ENCODE measurements at regions of chr6 and their contacts with region 1.

Region 1: DNA sequence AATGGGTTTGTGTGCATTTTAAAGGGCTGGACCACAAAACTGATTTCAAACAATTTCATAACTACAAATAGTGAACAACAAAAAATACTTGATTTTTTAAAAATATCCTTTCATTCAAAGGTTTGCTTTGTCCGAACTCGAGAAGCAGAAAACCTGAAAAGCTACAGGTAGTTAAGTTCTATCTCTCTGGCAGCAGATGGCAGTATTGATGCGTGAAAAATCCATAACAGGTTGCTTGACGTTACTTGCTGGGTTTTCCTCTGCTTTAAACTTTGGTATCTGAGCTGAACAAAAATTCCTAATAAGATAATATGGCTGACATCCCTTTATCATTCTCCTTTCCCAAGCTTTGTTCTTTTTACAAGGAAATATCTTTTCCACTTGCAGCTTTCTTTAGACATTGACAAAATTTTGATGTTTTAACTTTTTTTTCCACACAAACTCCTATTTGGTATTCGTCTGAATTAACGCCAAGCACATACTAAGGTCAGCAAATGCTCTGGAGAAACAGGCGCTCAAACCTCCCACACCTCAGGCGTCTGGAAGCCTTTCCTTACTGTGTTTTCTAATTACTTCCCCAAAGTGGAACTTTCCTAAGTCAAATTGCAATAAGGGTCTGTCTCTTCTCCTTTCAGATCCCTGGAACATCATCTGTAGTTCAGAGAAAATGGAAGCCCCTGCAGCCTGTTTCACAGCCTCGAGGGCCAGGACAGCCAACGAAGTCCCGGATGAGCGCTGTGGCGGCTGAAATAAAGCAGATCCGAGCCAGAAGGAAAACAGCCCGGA is 50.3 kb upstream of the GFRAL start:
- DNase-seq: peak; percentile 44 to 56 (median 56)
- ATAC-seq: peak; percentile 74 to 83
- H3K4me3 ChIP-seq: peak overlapping the region; percentile 18
- H3K27ac ChIP-seq: no peak overlapping the region
- H3K4me1 ChIP-seq: peaks cover 1% of the 10 kb centered on the region
- H3K27me3 ChIP-seq: no peaks in the 10 kb centered on the region

Region 2: DNA sequence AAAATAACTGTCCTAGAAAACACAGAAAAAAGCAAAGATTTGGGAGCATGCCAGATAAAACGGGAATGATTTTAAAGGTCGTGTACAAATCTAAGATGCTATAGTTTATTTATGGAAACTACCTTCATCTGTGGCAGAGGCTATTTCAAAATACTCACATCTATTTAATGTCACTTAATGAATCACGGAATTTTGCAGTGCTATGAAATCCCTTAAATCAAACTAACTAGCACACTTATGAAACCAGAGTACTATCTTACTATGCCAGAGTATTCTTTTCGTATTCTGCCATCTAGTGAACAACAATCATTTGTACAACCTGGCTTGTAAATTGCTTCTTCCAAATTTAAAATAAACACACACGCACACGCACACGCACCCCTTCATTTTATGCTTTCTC is 676.4 kb after region 1 on chr6:
- intact Hi-C with region 1: loop called in 2 of 4 experiments (anchors 10 kb)
- DNase-seq: no peak
- ATAC-seq: peak; percentile 62 to 68
- H3K4me3 ChIP-seq: peak overlapping the region; percentile 56
- H3K27ac ChIP-seq: no peak overlapping the region
- H3K4me1 ChIP-seq: no peaks in the 10 kb centered on the region
- H3K27me3 ChIP-seq: no peaks in the 10 kb centered on the region

Region 3: GRCh38 chr6:56292505-56293181 is 1015.7 kb after region 1 on chr6:
- intact Hi-C with region 1: loop called in 1 of 4 experiments (anchors 5 kb)
- DNase-seq: no peak
- ATAC-seq: peak; percentile 82 to 90
- H3K4me3 ChIP-seq: no peak overlapping the region
- H3K27ac ChIP-seq: no peak overlapping the region
- H3K4me1 ChIP-seq: peaks cover 4% of the 10 kb centered on the region
- H3K27me3 ChIP-seq: no peaks in the 10 kb centered on the region

Measured in right cardiac atrium (tissue), 5 donors.